Left lung (tissue), 14 donors: ENCODE measurements at regions of chr20 and their contacts with region 1.

Region 1: DNA sequence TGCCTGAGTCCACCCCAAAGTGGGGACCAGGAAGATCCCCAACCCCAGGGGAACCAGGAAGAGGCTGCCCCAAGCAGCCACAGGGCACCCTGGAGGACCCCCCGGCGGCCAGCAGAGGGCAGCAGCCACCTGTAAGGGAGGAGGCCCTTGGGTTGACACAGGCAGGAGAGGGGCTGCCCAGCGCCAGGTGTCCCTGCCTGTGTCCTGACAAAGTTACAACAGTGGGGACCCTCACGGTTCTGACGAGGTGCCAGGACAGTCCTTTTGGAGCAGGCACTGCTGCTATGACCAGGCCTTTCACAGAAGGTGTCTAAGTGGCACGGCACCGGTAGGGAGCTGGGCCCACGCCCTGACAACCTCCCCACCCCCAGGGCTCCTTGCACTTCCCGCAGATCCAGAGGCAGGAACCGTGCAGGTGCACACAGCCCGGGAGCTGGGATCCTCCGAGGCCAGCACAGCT is 176.7 kb downstream of the BMP7 start:
- DNase-seq: peak; percentile 38 to 91 (median 64)
- ATAC-seq: peak; percentile 89
- H3K4me3 ChIP-seq: no peak overlapping the region
- H3K27ac ChIP-seq: no peak overlapping the region
- H3K4me1 ChIP-seq: no peaks in the 10 kb centered on the region
- H3K27me3 ChIP-seq: peaks cover 0 to 66% of the 10 kb centered on the region in 2 donors
- CTCF ChIP-seq: peak; percentile 82 to 92

Region 2: GRCh38 chr20:57124800-57125399 is 35.2 kb after region 1 on chr20:
- intact Hi-C with region 1: no loop called
- DNase-seq: no peak
- ATAC-seq: no peak
- H3K4me3 ChIP-seq: no peak overlapping the region
- H3K27ac ChIP-seq: no peak overlapping the region
- H3K4me1 ChIP-seq: no peaks in the 10 kb centered on the region
- H3K27me3 ChIP-seq: peaks cover 0 to 8% of the 10 kb centered on the region in 2 donors
- CTCF ChIP-seq: no peak

Region 3: GRCh38 chr20:57346477-57346876 is 256.8 kb after region 1 on chr20:
- intact Hi-C with region 1: loop called in 1 of 2 experiments (anchors 5 kb)
- DNase-seq: peak in 3 of 4 donors; percentile 65 to 79 (median 67)
- ATAC-seq: peak; percentile 80
- H3K4me3 ChIP-seq: no peak overlapping the region
- H3K27ac ChIP-seq: no peak overlapping the region
- H3K4me1 ChIP-seq: peaks cover 0 to under 1% of the 10 kb centered on the region in 2 donors
- H3K27me3 ChIP-seq: peaks cover 0 to 19% of the 10 kb centered on the region in 2 donors
- CTCF ChIP-seq: peak; percentile 62 to 80

Region 4: DNA sequence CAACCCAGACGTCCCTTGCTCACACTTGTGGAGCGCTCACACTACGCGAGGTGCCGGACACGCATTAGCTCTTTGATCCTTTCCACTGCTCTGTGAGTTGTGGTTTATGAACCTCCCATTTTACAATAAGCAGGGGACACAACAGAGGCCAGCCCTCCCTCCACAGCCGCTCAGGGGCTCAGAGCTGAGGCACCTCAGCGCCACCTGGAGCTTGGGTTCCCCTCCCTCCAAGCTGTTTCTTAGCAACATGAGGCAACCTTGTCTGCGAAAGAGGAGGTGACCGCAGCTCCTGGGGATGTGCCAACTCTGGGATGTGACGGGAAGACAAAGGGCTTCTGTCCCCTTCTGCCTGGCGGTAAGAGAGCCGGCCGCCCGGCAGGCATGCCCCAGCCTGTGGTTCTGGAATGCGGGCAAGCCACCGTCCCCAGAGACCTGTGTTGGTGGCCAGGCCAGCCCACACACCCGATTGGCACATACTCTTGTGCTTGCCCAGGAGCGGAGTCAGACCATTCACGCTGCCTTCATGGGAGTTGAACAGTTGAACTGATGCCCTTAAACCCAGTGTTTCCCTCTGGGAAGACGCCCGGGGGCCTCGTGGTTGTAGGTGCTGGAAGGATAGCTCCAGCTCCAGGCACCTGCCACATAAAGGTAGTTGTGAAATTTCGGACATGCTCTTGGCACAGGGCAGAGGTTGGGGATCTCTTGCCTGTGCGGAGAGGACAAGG is 345.9 kb after region 1 on chr20:
- intact Hi-C with region 1: no loop called
- DNase-seq: peak; percentile 44 to 91 (median 78)
- ATAC-seq: peak; percentile 35
- H3K4me3 ChIP-seq: no peak overlapping the region
- H3K27ac ChIP-seq: peak overlapping the region in 1 of 2 donors; percentile 84
- H3K4me1 ChIP-seq: peaks cover 9 to 90% of the 10 kb centered on the region in 2 donors
- H3K27me3 ChIP-seq: no peaks in the 10 kb centered on the region
- CTCF ChIP-seq: no peak